Dorsolateral prefrontal cortex (tissue), 120 donors: ENCODE measurements at regions of chr11 and their contacts with region 1.

Region 1: DNA sequence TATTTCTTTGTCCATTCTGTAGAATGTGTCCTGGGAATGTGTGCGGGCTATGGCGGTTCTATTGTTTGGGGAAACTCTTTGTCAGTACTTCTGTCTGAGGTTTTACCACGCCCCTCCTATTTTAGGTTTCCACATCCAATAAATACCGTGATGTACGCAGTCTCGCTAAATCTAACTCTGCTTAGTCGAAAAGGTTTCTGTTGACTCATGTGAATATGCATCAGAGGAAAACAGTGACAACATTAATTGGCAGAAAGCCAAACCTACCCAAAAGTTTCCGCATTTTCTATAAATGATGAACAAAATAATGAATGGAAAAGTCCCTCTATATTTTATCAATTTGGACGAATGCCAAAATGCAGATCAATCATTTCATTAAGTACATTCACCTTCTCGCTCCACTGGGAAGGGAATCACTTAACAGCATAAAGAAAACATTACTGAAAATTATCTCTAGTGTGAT is 143.4 kb downstream of the MAML2 start:
- DNase-seq: no peak
- H3K4me3 ChIP-seq: no peak overlapping the region
- H3K27ac ChIP-seq: peak overlapping the region in 3 of 59 donors; percentile 16 to 59 (median 34)
- H3K27me3 ChIP-seq: no peaks in the 10 kb centered on the region
- CTCF ChIP-seq: no peak

Region 2: DNA sequence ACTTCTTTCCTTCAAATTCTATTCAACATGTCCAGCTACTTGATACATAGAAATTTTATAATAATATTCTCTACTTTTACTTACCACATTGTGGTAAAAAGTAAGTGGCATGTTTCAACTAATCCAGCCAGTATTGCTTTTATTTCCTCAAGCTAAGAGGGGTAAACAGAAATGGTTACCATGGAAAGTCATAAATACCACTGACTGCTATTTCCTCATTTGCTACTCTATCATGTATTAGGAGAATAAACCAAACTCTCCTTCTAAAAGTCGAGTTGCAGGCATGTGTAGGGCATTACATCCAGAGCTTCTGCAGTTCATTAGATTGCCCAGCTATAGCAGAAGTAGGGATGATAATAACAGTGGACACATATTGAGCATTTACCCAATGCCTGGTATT is 65.0 kb before region 1 on chr11:
- intact Hi-C with region 1: no loop called
- DNase-seq: no peak
- H3K4me3 ChIP-seq: no peak overlapping the region
- H3K27ac ChIP-seq: no peak overlapping the region
- H3K27me3 ChIP-seq: no peaks in the 10 kb centered on the region
- CTCF ChIP-seq: no peak

Region 3: GRCh38 chr11:96162816-96163499 is 36.6 kb before region 1 on chr11:
- intact Hi-C with region 1: loop called in 1 of 2 experiments (anchors 5 kb)
- DNase-seq: no peak
- H3K4me3 ChIP-seq: no peak overlapping the region
- H3K27ac ChIP-seq: peak overlapping the region in 5 of 59 donors; percentile 9 to 35 (median 23)
- H3K27me3 ChIP-seq: no peaks in the 10 kb centered on the region
- CTCF ChIP-seq: no peak